Activated T-helper 2 cell treated with anti-CD3 and anti-CD28 coated beads, Interferon-gamma antibody, Interleukin-2, Interleukin-4, amounts not matched to agents 10 μg/mL and 5 μg/mL and 100 μg/mL, durations not matched to agents 14 hours and 24 hours and 36 hours (primary cell): ENCODE measurements at regions of chr19 and their contacts with region 1.

Region 1: DNA sequence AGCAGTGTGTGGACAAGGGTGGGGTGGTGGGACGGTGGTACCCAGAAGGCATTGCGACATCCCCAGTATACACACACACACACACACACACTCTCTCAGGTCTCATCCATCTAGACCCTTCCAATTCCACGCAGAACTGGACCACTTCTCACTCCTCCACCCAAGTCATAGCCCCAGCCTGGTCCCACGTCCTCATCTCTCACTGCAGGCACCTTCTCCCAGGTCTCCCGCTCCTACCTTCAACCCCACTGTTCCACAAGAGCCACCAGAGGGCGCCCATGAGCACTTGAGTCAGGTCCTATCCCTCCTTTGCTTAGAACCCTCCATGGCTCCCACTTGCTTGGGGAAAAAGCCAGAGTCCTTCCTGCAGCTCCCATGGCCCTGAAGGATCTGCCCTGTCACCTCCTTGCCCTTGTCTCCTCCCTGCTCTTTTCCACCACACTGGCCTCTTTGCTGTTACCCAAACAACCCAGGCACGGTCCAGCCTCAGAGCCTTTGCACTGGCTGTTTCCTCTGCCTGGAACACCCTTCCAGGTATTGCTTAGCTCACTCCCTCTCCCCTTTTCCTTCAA is 62.6 kb downstream of the IER2 start:
- DNase-seq: peak; percentile 55
- H3K4me3 Mint-ChIP-seq: no peak overlapping the region
- H3K27ac Mint-ChIP-seq: no peak overlapping the region
- H3K4me1 Mint-ChIP-seq: peaks cover 13% of the 10 kb centered on the region
- H3K27me3 Mint-ChIP-seq: no peaks in the 10 kb centered on the region

Region 2: GRCh38 chr19:12983542-12984142 is 229.2 kb before region 1 on chr19:
- intact Hi-C with region 1: no loop called
- DNase-seq: peak; percentile 77
- H3K4me3 Mint-ChIP-seq: no peak overlapping the region
- H3K27ac Mint-ChIP-seq: no peak overlapping the region
- H3K4me1 Mint-ChIP-seq: no peaks in the 10 kb centered on the region
- H3K27me3 Mint-ChIP-seq: peaks cover 5% of the 10 kb centered on the region

Region 3: GRCh38 chr19:13132471-13133180 is 80.2 kb before region 1 on chr19:
- intact Hi-C with region 1: no loop called
- DNase-seq: peak; percentile 70
- H3K4me3 Mint-ChIP-seq: peak overlapping the region; percentile 78
- H3K27ac Mint-ChIP-seq: peak overlapping the region; percentile 98
- H3K4me1 Mint-ChIP-seq: peaks cover 42% of the 10 kb centered on the region
- H3K27me3 Mint-ChIP-seq: no peaks in the 10 kb centered on the region

Region 4: DNA sequence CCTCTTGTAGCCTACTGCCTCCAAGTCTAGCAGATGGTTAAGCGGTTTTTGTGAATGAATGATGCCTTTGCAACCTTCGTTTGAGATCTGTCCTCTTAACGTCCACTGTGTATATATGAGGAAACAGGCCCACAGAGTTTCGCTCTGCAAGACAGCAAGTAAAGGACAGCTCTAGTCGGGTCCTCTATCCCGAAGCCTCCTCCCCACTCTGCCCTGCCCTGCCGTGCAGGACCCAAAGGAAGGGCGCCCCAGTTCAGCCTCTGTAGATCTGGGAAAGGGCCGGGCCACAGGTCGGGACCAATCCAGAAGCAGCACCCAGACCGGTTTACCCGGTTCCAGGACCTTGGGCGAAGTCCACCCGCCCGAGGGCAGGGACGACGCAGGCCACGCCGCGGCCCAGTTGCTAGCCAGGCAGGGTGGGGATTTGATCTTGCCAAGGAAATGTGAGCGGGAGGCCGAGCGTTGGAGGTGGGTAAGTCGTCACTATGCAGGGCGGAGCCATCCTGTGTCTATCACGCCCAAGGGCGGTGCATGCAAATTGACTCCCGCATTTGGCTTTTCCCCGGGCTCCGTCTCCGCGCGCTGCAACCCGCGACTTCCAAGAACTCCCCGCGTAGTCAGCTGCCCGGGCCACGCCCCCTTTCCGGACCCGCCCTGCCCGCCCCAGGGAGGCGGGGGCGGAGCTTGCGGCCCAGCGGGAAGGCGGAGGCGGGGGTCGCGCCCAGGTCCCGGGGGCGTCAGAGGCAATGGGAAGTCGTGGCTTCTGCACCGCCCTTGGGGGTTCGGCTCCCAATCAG is 50.1 kb before region 1 on chr19:
- intact Hi-C with region 1: loop called (anchors 2 kb)
- DNase-seq: peak; percentile 89
- H3K4me3 Mint-ChIP-seq: peak overlapping the region; percentile 86
- H3K27ac Mint-ChIP-seq: peak overlapping the region; percentile 95
- H3K4me1 Mint-ChIP-seq: peaks cover 47% of the 10 kb centered on the region
- H3K27me3 Mint-ChIP-seq: no peaks in the 10 kb centered on the region

Region 5: GRCh38 chr19:13172897-13173752 is 39.7 kb before region 1 on chr19:
- intact Hi-C with region 1: no loop called
- DNase-seq: no peak
- H3K4me3 Mint-ChIP-seq: peak overlapping the region; percentile 80
- H3K27ac Mint-ChIP-seq: peak overlapping the region; percentile 97
- H3K4me1 Mint-ChIP-seq: peaks cover 38% of the 10 kb centered on the region
- H3K27me3 Mint-ChIP-seq: no peaks in the 10 kb centered on the region

Region 6: DNA sequence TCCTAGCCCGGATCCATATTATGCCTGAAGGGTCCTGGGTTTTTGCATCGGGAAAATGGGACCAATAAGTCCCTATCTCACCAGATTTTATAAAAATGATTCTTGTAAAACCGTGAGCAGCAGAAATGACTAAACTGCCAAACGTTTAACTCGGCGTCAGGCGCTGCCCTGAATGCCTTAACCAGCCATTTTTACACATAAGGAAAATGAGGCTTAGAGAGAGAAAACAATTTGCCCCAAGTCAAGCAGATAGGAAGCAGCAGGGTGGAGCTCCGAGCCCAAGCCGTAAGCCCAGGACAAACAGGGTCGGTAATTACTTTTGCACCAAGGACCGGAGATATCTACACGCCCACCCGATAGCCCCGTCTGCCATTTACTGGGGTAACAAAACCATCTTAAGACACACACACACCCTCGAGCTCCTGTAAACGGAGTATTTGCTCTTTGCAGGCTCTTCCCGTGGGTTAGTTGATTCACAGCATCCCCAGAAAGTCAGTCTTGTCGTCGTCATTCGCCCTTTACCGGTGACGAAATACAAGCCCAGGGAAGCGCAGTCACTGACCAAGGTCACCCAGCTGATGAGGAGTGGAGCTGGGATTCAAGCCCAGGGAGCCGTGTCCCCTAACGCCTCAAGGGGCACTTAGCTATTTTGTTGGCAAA is 535.5 kb after region 1 on chr19:
- intact Hi-C with region 1: loop called (anchors 5 kb)
- DNase-seq: no peak
- H3K4me3 Mint-ChIP-seq: peak overlapping the region; percentile 87
- H3K27ac Mint-ChIP-seq: peak overlapping the region; percentile 85
- H3K4me1 Mint-ChIP-seq: peaks cover 11% of the 10 kb centered on the region
- H3K27me3 Mint-ChIP-seq: no peaks in the 10 kb centered on the region